Activated naive CD4-positive, alpha-beta T cell treated with anti-CD3 and anti-CD28 coated beads for 36 hours (primary cell): ENCODE measurements at regions of chr10 and their contacts with region 1.

Region 1: DNA sequence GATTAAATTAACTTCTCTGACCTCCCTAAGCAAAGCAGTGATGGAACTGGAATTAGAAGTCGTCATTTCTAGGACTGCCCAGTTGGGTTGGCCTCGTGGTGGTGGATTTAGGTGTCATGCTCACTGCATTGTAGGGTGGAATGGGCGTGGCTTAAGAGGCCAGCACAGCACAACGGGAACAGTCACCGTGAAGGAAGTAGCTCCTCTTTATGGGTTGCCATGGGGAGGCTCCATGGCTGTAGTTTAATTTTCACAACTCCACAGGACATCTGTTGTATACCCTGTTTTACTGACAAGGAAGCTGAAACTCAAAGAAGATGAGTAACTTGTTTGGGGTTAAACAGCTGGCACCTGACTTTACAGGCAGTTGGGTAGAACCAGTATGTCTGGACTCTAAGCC is 208.3 kb downstream of the CELF2 start:
- DNase-seq: peak; percentile 88
- H3K4me3 Mint-ChIP-seq: peak overlapping the region; percentile 56
- H3K27ac Mint-ChIP-seq: peak overlapping the region; percentile 87
- H3K4me1 Mint-ChIP-seq: peaks cover 89% of the 10 kb centered on the region
- H3K27me3 Mint-ChIP-seq: no peaks in the 10 kb centered on the region

Region 2: GRCh38 chr10:11209830-11210181 is 16.1 kb before region 1 on chr10:
- CTCF ChIA-PET with region 1: interaction called, 10 read pairs
- intact Hi-C with region 1: loop called (anchors 1 kb)
- DNase-seq: peak; percentile 38
- H3K4me3 Mint-ChIP-seq: peak overlapping the region; percentile 60
- H3K27ac Mint-ChIP-seq: peak overlapping the region; percentile 95
- H3K4me1 Mint-ChIP-seq: peaks cover 99% of the 10 kb centered on the region
- H3K27me3 Mint-ChIP-seq: no peaks in the 10 kb centered on the region